Dorsolateral prefrontal cortex (tissue), 120 donors: ENCODE measurements at regions of chr1 and their contacts with region 1.

Region 1: DNA sequence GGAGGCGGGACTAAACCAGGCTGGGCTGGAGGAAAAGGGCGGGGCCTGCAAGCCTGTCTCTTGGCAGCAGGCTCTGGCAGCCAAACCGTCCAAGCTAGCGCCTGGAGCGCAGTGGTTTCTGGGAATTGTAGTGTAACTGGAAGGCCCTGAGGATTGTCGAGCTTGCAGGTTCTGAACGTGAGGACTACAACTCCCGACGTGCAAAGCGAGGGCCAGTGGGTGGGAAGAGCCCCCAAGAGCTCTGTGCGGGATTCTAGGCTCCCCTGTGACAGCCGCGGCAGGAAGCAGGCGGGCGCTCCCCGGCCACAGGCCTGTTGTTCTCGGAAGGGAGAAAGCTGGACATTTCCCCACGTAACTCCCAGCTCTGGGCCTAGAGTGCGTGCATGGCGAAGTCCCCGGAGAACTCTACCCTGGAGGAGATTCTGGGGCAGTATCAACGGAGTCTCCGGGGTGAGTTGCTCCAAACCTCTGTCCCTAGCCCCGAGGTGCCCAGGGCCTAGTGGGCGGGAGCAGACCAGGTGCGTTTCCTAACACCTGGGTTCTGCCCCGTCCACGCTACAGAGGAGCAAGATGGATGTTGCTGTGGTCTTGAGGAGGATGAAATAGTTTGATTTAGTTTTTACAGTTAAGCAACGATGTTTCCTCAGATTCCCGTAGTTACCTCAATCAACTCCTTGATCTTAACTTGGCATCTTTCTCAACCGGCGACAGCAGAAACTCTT is at the start of gene SDCCAG8:
- DNase-seq: peak; percentile 96 to 99 (median 99)
- H3K4me3 ChIP-seq: peak within 1 kb of the TSS; percentile 49 to 97 (median 86)
- H3K27ac ChIP-seq: peak within 1 kb of the TSS; percentile 83 to 100 (median 99)
- H3K27me3 ChIP-seq: no peaks in the 10 kb centered on the region
- CTCF ChIP-seq: peak in 13 of 56 donors; percentile 1 to 45 (median 10)
- total RNA-seq, gene SDCCAG8: 60.3 to 122 (median 85.0) TPM

Region 2: GRCh38 chr1:242828199-242828598 is 427.8 kb before region 1 on chr1:
- intact Hi-C with region 1: loop called in 1 of 2 experiments (anchors 10 kb)
- DNase-seq: peak; percentile 6 to 77 (median 57)
- H3K4me3 ChIP-seq: peak overlapping the region in 4 of 59 donors; percentile 7 to 37 (median 22)
- H3K27ac ChIP-seq: peak overlapping the region in 48 of 59 donors; percentile 8 to 86 (median 66)
- H3K27me3 ChIP-seq: no peaks in the 10 kb centered on the region
- CTCF ChIP-seq: peak in 53 of 56 donors; percentile 24 to 77 (median 56)

Region 3: GRCh38 chr1:243316366-243316989 is 60.5 kb after region 1 on chr1:
- intact Hi-C with region 1: loop called (anchors 1 to 5 kb)
- DNase-seq: peak; percentile 23 to 91 (median 84)
- H3K4me3 ChIP-seq: peak overlapping the region in 46 of 59 donors; percentile 2 to 55 (median 22)
- H3K27ac ChIP-seq: peak overlapping the region in 58 of 59 donors; percentile 6 to 91 (median 80)
- H3K27me3 ChIP-seq: no peaks in the 10 kb centered on the region
- CTCF ChIP-seq: peak in 7 of 56 donors; percentile 19 to 29 (median 22)